B cell (primary cell): ENCODE measurements at regions of chr16 and their contacts with region 1.

Region 1: GRCh38 chr16:71484006-71484893 is 4.9 kb downstream of the ZNF19 start:
- DNase-seq: peak; percentile 95
- ATAC-seq: peak; percentile 85
- H3K4me3 ChIP-seq: peak overlapping the region; percentile 57 to 96 (median 89)
- H3K4me3 Mint-ChIP-seq: peak overlapping the region; percentile 89
- H3K27ac ChIP-seq: peak overlapping the region; percentile 99 to 100
- H3K27ac Mint-ChIP-seq: peak overlapping the region; percentile 93
- H3K4me1 ChIP-seq: peaks cover 9 to 12% of the 10 kb centered on the region in 2 donors
- H3K4me1 Mint-ChIP-seq: peaks cover 15% of the 10 kb centered on the region
- H3K27me3 ChIP-seq: no peaks in the 10 kb centered on the region
- H3K27me3 Mint-ChIP-seq: peaks cover 7% of the 10 kb centered on the region
- CTCF ChIP-seq: no peak

Region 2: DNA sequence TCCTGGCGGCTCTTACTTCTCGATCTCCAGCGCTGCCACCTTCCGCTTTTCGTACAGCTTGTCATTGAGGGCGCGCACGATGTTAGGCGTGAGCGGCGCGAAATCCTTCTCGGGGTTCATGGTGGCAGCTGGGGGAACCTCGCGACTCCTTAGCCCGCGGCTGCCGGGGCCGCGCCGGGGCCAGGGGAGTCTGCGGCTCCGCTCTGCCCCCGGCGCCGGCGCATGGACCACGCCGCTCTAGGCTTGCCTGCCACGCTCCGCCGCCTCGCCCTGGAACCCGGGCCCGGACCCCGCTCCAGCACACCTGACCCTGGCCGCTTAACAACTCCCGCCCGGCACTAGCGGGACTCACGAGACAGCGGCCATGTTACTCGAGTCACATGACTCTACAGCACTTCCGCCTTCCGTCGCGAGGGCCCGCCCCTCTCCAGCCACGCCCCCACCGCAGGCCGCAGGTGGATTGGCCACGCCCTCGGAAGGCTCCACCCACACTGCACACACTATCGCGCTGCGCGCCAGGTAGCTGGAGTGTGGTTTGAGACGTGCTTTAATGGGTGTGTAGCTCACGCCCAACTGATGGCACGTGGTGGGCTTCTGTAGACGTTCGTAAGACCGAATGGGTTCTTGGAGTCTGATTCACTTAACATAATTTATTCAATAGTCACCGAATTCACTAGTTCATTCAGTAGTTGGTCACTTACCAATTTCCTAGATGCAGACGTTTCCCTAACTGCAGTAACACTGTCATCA is 683.3 kb before region 1 on chr16 and contains the start of gene VAC14:
- CTCF ChIA-PET with region 1: no interaction called
- POLR2A ChIA-PET with region 1: no interaction called
- intact Hi-C with region 1: loop called (anchors 1 kb)
- DNase-seq: peak; percentile 97
- ATAC-seq: peak; percentile 98
- H3K4me3 ChIP-seq: peak within 1 kb of the TSS; percentile 38 to 86 (median 66)
- H3K4me3 Mint-ChIP-seq: peak within 1 kb of the TSS; percentile 98
- H3K27ac ChIP-seq: peak within 1 kb of the TSS; percentile 69 to 90
- H3K27ac Mint-ChIP-seq: peak within 1 kb of the TSS; percentile 96
- H3K4me1 ChIP-seq: peaks cover 16 to 21% of the 10 kb centered on the region in 2 donors
- H3K4me1 Mint-ChIP-seq: peaks cover 36% of the 10 kb centered on the region
- H3K27me3 ChIP-seq: peaks cover 0 to 6% (median 0%) of the 10 kb centered on the region in 4 experiments
- H3K27me3 Mint-ChIP-seq: no peaks in the 10 kb centered on the region
- CTCF ChIP-seq: no peak
- total RNA-seq, gene VAC14: 59.7 and 64.7 TPM in 2 replicates

Region 3: GRCh38 chr16:71453036-71453435 is 31.2 kb before region 1 on chr16:
- CTCF ChIA-PET with region 1: interaction called, 3 read pairs
- POLR2A ChIA-PET with region 1: no interaction called
- intact Hi-C with region 1: loop called (anchors 5 kb)
- DNase-seq: no peak
- ATAC-seq: no peak
- H3K4me3 ChIP-seq: no peak overlapping the region
- H3K4me3 Mint-ChIP-seq: no peak overlapping the region
- H3K27ac ChIP-seq: no peak overlapping the region
- H3K27ac Mint-ChIP-seq: no peak overlapping the region
- H3K4me1 ChIP-seq: no peaks in the 10 kb centered on the region
- H3K4me1 Mint-ChIP-seq: no peaks in the 10 kb centered on the region
- H3K27me3 ChIP-seq: no peaks in the 10 kb centered on the region
- H3K27me3 Mint-ChIP-seq: no peaks in the 10 kb centered on the region
- CTCF ChIP-seq: no peak

Region 4: GRCh38 chr16:71461686-71462648 is 22.3 kb before region 1 on chr16 and contains the start of gene ZNF23:
- CTCF ChIA-PET with region 1: interaction called, 34 read pairs
- POLR2A ChIA-PET with region 1: interaction called, 24 read pairs
- intact Hi-C with region 1: no loop called
- DNase-seq: peak; percentile 91
- ATAC-seq: peak; percentile 97
- H3K4me3 ChIP-seq: peak within 1 kb of the TSS; percentile 62 to 99 (median 96)
- H3K4me3 Mint-ChIP-seq: peak within 1 kb of the TSS; percentile 96
- H3K27ac ChIP-seq: peak within 1 kb of the TSS; percentile 91 to 95
- H3K27ac Mint-ChIP-seq: peak within 1 kb of the TSS; percentile 95
- H3K4me1 ChIP-seq: peaks cover 14 to 16% of the 10 kb centered on the region in 2 donors
- H3K4me1 Mint-ChIP-seq: peaks cover 32% of the 10 kb centered on the region
- H3K27me3 ChIP-seq: no peaks in the 10 kb centered on the region
- H3K27me3 Mint-ChIP-seq: no peaks in the 10 kb centered on the region
- CTCF ChIP-seq: peak; percentile 36
- total RNA-seq, gene ZNF23: 15.0 and 18.3 TPM in 2 replicates

Region 5: GRCh38 chr16:72008424-72009216 is 524.4 kb after region 1 on chr16 and contains the start of gene DHODH:
- CTCF ChIA-PET with region 1: no interaction called
- POLR2A ChIA-PET with region 1: no interaction called
- intact Hi-C with region 1: loop called (anchors 5 kb)
- DNase-seq: peak; percentile 99
- ATAC-seq: peak; percentile 98
- H3K4me3 ChIP-seq: peak within 1 kb of the TSS; percentile 56 to 96 (median 66)
- H3K4me3 Mint-ChIP-seq: peak within 1 kb of the TSS; percentile 95
- H3K27ac ChIP-seq: peak within 1 kb of the TSS; percentile 73 to 85
- H3K27ac Mint-ChIP-seq: peak within 1 kb of the TSS; percentile 94
- H3K4me1 ChIP-seq: peaks cover 0 to 12% of the 10 kb centered on the region in 2 donors
- H3K4me1 Mint-ChIP-seq: peaks cover 16% of the 10 kb centered on the region
- H3K27me3 ChIP-seq: no peaks in the 10 kb centered on the region
- H3K27me3 Mint-ChIP-seq: peaks cover 4% of the 10 kb centered on the region
- CTCF ChIP-seq: no peak
- total RNA-seq, gene DHODH: 11.3 and 14.7 TPM in 2 replicates